Esophagus muscularis mucosa (tissue), 4 donors: ENCODE measurements at regions of chr17 and their contacts with region 1.

Region 1: GRCh38 chr17:12691182-12691581 is 25.5 kb downstream of the MYOCD start:
- DNase-seq: no peak
- H3K4me3 ChIP-seq: peak overlapping the region in 1 of 4 donors; percentile 13
- H3K27ac ChIP-seq: peak overlapping the region; percentile 75 to 83 (median 80)
- H3K4me1 ChIP-seq: peaks cover 11 to 68% (median 44%) of the 10 kb centered on the region in 4 donors
- H3K27me3 ChIP-seq: no peaks in the 10 kb centered on the region
- CTCF ChIP-seq: no peak
- EP300 ChIP-seq: no peak
- POLR2A ChIP-seq: no peak

Region 2: GRCh38 chr17:12522743-12523183 is 168.4 kb before region 1 on chr17:
- intact Hi-C with region 1: no loop called
- DNase-seq: no peak
- H3K4me3 ChIP-seq: no peak overlapping the region
- H3K27ac ChIP-seq: peak overlapping the region in 2 of 4 donors; percentile 15 to 34
- H3K4me1 ChIP-seq: peaks cover 3 to 23% (median 20%) of the 10 kb centered on the region in 4 donors
- H3K27me3 ChIP-seq: no peaks in the 10 kb centered on the region
- CTCF ChIP-seq: no peak
- EP300 ChIP-seq: no peak
- POLR2A ChIP-seq: no peak

Region 3: DNA sequence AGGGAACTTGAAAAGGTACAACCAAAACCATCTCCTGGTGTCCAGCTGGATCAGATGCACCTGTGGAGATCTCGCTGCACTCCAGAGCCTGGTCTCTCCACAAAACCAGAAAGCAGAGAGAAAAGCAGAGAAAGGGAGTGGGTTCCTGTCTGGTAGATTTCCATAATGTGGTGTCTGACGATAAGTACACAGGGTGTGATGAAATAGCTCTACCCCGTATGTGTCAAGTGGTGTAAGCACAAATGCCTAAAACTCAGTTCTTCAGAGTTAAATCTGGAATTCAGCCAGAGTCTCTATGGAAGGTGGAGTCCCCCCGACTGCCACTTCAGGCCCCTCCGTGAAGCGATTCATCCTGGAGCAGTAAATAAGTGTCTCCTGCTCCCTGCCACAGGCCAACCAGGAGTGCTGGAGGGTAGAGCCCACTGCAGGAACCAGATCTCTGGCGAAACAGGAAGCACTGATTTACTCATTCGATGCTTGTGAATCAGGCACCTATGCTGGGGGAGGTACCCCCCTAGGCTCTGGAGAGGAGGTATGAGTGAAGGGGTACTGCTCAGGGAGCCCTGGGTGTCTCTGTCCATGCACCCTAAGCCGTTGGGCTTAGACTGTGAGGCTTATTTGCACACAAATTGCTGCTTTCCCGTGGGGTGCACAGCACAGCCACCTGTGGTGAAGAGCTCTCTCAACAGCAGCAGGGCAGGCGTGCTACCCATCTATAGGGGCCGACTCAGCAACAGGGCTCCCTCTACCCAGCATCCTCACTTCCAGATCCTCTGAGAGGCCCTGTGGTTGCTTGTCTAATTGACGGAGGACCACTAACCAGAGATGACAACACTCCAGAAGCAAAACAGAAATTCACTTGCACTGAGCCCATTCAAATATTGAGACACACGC is 122.6 kb before region 1 on chr17:
- intact Hi-C with region 1: no loop called
- DNase-seq: no peak
- H3K4me3 ChIP-seq: no peak overlapping the region
- H3K27ac ChIP-seq: peak overlapping the region; percentile 3 to 74 (median 56)
- H3K4me1 ChIP-seq: peaks cover 4 to 36% (median 24%) of the 10 kb centered on the region in 4 donors
- H3K27me3 ChIP-seq: no peaks in the 10 kb centered on the region
- CTCF ChIP-seq: no peak
- EP300 ChIP-seq: no peak
- POLR2A ChIP-seq: no peak

Region 4: DNA sequence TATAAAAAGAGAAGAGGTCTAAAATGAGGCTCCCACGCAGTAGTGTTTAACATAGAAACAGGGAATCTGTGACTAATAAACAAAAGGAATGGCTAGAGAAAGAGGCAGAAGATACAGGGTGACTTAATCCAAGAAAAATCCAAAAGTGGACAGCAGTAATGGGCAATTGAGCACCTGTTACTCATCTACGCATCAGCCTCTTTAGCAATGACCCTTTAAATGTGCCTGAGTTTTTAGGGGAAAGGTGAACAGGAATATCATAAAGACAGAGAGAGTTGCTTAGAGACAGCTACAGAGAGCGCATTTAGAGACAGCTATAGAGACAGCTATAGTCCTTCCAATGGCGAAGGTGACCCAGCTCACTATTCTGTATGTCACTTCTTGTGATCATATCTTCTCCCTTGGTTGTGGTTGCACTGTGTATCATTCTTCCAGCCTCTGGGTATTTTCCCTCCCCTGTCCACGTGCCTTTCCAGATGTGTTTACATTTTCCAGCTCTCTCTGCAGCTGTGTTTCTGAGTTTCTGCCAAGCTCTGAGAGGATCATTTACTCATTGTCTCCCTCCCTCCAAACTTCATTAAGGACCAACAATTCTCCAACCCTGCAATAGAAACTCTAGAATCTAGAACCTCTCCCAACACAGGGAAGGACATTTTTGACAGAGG is 36.0 kb after region 1 on chr17:
- intact Hi-C with region 1: loop called (anchors 5 kb)
- DNase-seq: peak; percentile 87
- H3K4me3 ChIP-seq: no peak overlapping the region
- H3K27ac ChIP-seq: peak overlapping the region; percentile 54 to 82 (median 66)
- H3K4me1 ChIP-seq: peaks cover 15 to 62% (median 48%) of the 10 kb centered on the region in 4 donors
- H3K27me3 ChIP-seq: no peaks in the 10 kb centered on the region
- CTCF ChIP-seq: no peak
- EP300 ChIP-seq: no peak
- POLR2A ChIP-seq: no peak